ENCODE measurements at regions of chr12 and their contacts with region 1.

Region 1: DNA sequence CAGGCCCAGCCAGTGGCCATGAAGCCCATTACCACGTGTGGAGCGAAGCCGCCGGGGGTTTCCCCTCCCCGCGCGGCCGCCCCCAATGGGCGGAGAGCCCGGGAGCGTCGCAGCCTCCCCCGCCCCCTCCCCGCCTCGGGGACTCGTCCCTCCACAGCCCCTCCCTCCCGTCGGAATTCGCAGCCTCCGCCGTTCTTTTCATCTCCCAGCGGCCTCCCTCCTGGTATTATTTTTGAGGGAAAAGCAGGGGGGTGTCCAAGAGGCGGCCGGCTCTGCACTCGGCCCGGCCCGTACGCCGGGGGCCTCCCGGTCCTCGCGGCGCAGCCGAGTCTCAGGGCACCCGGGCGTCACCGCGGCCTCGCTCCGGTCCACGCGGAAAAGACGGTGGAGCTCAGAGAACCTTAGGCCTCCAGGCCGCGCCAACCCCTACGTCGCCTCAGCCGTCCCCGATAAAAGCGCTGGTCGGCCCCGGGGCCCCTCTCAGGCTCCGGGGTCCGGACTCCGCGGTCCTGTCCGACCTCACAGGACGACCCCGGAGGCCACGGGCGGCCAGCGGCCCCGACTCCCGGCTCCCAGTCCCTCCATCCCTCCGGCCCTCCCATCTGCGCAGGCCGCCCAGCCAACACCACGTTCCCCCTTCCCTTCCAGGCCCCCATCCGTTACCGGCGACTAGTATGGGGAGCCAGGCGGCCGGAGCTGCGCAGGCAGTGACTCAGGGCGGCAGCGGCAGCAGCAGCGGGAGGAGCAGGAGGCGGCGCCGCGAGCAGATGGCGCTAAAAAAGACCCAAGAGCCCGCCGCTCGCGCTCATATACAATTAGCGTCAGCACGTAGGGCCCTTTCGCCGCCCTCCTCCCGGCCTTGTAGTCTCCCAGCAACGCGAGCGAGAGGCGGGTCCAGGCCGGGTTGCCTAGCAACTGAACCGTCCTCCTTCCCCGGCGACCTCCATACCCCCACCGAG is at the start of gene NAP1L1:
- DNase-seq: peak; percentile 69
- ATAC-seq: peak; percentile 97
- H3K4me3 ChIP-seq: peak within 1 kb of the TSS; percentile 61 to 96
- H3K27ac ChIP-seq: peak within 1 kb of the TSS; percentile 90
- H3K4me1 ChIP-seq: peaks cover 26% of the 10 kb centered on the region
- H3K27me3 ChIP-seq: no peaks in the 10 kb centered on the region
- CTCF ChIP-seq: no peak
- total RNA-seq, gene NAP1L1: 620 TPM

Region 2: DNA sequence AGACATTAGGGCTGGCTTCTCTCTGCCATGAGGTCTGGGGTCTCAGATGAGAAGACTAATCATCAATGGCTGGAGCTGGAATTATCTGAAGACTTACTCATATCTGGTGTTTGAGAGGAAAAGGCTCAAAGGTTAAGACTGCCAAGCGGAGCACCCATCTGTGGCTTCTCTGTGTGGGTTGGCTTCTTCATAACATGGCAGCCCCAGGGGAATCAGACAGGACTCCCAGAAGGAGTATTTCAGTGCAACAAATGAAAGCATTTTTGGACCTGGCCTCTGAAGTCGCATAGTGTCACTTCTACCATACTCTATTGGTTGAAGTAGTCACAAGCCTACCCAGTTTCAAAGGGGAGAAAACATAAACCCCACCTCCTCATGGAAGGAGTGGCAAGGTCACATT is 401.0 kb before region 1 on chr12:
- CTCF ChIA-PET with region 1: no interaction called
- POLR2A ChIA-PET with region 1: no interaction called
- in situ Hi-C with region 1: no loop called
- intact Hi-C with region 1: no loop called
- DNase-seq: no peak
- ATAC-seq: no peak
- H3K4me3 ChIP-seq: no peak overlapping the region
- H3K27ac ChIP-seq: peak overlapping the region; percentile 72; the same call in 1 of the 2 replicates
- H3K4me1 ChIP-seq: no peaks in the 10 kb centered on the region
- H3K27me3 ChIP-seq: no peaks in the 10 kb centered on the region
- CTCF ChIP-seq: no peak

Region 3: GRCh38 chr12:76158518-76159321 is 74.5 kb after region 1 on chr12:
- CTCF ChIA-PET with region 1: no interaction called
- POLR2A ChIA-PET with region 1: no interaction called
- in situ Hi-C with region 1: no loop called
- intact Hi-C with region 1: loop called (anchors 10 kb)
- DNase-seq: peak; percentile 56
- ATAC-seq: peak; percentile 100
- H3K4me3 ChIP-seq: peak overlapping the region in 1 of 2 experiments; percentile 32; a peak in 2 of 4 replicates
- H3K27ac ChIP-seq: peak overlapping the region; percentile 55; the same call in 1 of the 2 replicates
- H3K4me1 ChIP-seq: no peaks in the 10 kb centered on the region
- H3K27me3 ChIP-seq: no peaks in the 10 kb centered on the region
- CTCF ChIP-seq: peak; percentile 91

Region 4: GRCh38 chr12:76348079-76348901 is 264.1 kb after region 1 on chr12 and contains the start of gene BBS10:
- CTCF ChIA-PET with region 1: no interaction called
- POLR2A ChIA-PET with region 1: no interaction called
- in situ Hi-C with region 1: no loop called
- intact Hi-C with region 1: loop called (anchors 5 kb)
- DNase-seq: no peak
- ATAC-seq: peak; percentile 98
- H3K4me3 ChIP-seq: peak within 1 kb of the TSS; percentile 60 to 85
- H3K27ac ChIP-seq: peak within 1 kb of the TSS; percentile 85
- H3K4me1 ChIP-seq: peaks cover 16% of the 10 kb centered on the region
- H3K27me3 ChIP-seq: no peaks in the 10 kb centered on the region
- CTCF ChIP-seq: peak; percentile 74
- total RNA-seq, gene BBS10: 7.8 TPM

Region 5: DNA sequence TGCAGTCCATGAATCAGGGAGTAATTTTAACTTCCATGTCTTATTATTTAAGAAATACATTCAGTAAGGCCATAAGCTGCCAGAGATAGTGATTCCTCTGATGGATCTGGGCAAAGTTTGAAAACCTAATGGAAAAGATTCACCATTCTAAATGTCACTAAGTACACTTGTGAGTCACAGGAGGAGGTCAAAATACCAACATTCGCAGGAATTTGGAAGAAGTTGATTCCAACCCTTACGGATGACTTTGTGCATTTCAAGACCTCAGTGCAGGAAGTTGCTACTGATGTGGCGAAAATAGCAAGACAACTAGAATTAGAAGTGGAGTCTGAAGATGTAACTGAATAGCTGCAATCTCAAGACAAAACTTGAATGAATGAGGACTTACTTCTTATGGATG is 405.6 kb after region 1 on chr12:
- CTCF ChIA-PET with region 1: no interaction called
- POLR2A ChIA-PET with region 1: no interaction called
- in situ Hi-C with region 1: no loop called
- intact Hi-C with region 1: no loop called
- DNase-seq: no peak
- ATAC-seq: no peak
- H3K4me3 ChIP-seq: no peak overlapping the region
- H3K27ac ChIP-seq: no peak overlapping the region
- H3K4me1 ChIP-seq: no peaks in the 10 kb centered on the region; the same call in 1 of the 2 replicates
- H3K27me3 ChIP-seq: no peaks in the 10 kb centered on the region
- CTCF ChIP-seq: no peak

Measured in Panc1 (cell line).